ENCODE measurements at regions of chr7 and their contacts with region 1.

Region 1: GRCh38 chr7:158829342-158830210 is at the start of gene ESYT2:
- DNase-seq: peak; percentile 98 to 100 (median 99)
- H3K4me3 ChIP-seq: peak within 1 kb of the TSS; percentile 87 to 89
- H3K4me3 Mint-ChIP-seq: peak within 1 kb of the TSS; percentile 81 to 98 (median 95)
- H3K27ac ChIP-seq: peak within 1 kb of the TSS; percentile 95
- H3K27ac Mint-ChIP-seq: peak within 1 kb of the TSS; percentile 90 to 99 (median 95)
- H3K4me1 ChIP-seq: peaks cover 41% of the 10 kb centered on the region
- H3K4me1 Mint-ChIP-seq: peaks cover 16 to 47% (median 25%) of the 10 kb centered on the region in 4 donors
- H3K27me3 ChIP-seq: no peaks in the 10 kb centered on the region
- H3K27me3 Mint-ChIP-seq: no peaks in the 10 kb centered on the region
- total RNA-seq, gene ESYT2: 114 to 116 TPM

Region 2: GRCh38 chr7:158760936-158761335 is 68.6 kb before region 1 on chr7:
- CTCF ChIA-PET with region 1: interaction called, 4 read pairs
- POLR2A ChIA-PET with region 1: interaction called, 5 read pairs
- intact Hi-C with region 1: loop called (anchors 2 kb)
- DNase-seq: peak in 2 of 5 donors; percentile 19 to 24
- H3K4me3 ChIP-seq: no peak overlapping the region
- H3K4me3 Mint-ChIP-seq: no peak overlapping the region
- H3K27ac ChIP-seq: no peak overlapping the region
- H3K27ac Mint-ChIP-seq: peak overlapping the region in 5 of 7 donors; percentile 5 to 82 (median 56)
- H3K4me1 ChIP-seq: no peaks in the 10 kb centered on the region
- H3K4me1 Mint-ChIP-seq: peaks cover 0 to 8% (median 1%) of the 10 kb centered on the region in 4 donors
- H3K27me3 ChIP-seq: no peaks in the 10 kb centered on the region
- H3K27me3 Mint-ChIP-seq: no peaks in the 10 kb centered on the region

Region 3: GRCh38 chr7:158795272-158795671 is 34.3 kb before region 1 on chr7:
- CTCF ChIA-PET with region 1: interaction called, 3 read pairs
- POLR2A ChIA-PET with region 1: interaction called, 20 read pairs
- intact Hi-C with region 1: no loop called
- DNase-seq: no peak
- H3K4me3 ChIP-seq: no peak overlapping the region
- H3K4me3 Mint-ChIP-seq: no peak overlapping the region
- H3K27ac ChIP-seq: no peak overlapping the region
- H3K27ac Mint-ChIP-seq: no peak overlapping the region
- H3K4me1 ChIP-seq: peaks cover 16% of the 10 kb centered on the region
- H3K4me1 Mint-ChIP-seq: peaks cover 13 to 34% (median 21%) of the 10 kb centered on the region in 4 donors
- H3K27me3 ChIP-seq: no peaks in the 10 kb centered on the region
- H3K27me3 Mint-ChIP-seq: no peaks in the 10 kb centered on the region

Region 4: DNA sequence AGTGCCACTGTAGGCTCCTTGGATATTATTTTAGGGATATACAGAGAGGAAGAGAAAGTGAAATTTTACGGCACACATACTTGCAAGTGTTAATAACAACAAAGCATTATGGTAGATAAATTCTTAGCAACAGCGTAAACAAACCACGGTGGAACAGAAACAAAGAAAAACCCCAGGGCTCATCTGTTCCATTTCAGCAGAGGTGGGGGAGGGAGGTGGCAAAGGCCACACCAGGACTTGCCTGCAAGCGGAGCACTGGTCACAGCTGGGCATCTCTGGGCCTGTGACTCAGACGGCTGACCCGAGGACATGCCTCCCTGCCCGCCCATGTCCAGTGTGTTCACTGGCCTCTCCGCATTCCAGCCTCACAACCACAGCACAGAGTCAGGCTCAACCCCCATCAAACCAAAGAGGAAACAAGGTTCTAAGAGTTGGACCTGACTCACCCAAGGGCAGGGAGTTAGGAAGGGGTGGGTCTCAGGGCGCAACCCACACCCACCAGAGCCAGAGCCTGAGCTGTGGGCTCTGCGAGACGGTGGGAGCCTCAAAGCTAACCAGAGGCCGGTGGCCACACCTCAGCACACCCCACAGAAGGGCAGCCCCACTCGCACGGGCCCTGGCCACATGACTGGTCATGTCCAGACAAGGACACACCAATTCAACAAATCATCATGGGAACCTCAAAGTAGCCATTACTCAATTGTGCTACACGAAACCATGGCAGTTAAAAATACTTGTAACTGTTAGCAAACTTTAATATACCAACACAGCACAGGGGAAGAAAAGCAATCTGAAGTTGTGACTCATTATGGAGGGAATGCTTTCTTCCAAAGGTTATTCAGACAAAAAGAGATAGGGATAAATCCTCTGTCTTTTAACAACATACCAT is 11.0 kb before region 1 on chr7:
- CTCF ChIA-PET with region 1: interaction called, 8 read pairs
- POLR2A ChIA-PET with region 1: interaction called, 255 read pairs
- intact Hi-C with region 1: loop called (anchors 1 kb)
- DNase-seq: peak; percentile 86 to 95 (median 88)
- H3K4me3 ChIP-seq: peak overlapping the region; percentile 37 to 53
- H3K4me3 Mint-ChIP-seq: peak overlapping the region; percentile 85 to 96 (median 90)
- H3K27ac ChIP-seq: peak overlapping the region; percentile 91
- H3K27ac Mint-ChIP-seq: peak overlapping the region; percentile 97 to 100 (median 99)
- H3K4me1 ChIP-seq: peaks cover 93% of the 10 kb centered on the region
- H3K4me1 Mint-ChIP-seq: peaks cover 70 to 94% (median 82%) of the 10 kb centered on the region in 4 donors
- H3K27me3 ChIP-seq: no peaks in the 10 kb centered on the region
- H3K27me3 Mint-ChIP-seq: no peaks in the 10 kb centered on the region

Region 5: GRCh38 chr7:158856883-158857668 is 27.5 kb after region 1 on chr7:
- CTCF ChIA-PET with region 1: interaction called, 5 read pairs
- POLR2A ChIA-PET with region 1: interaction called, 17 read pairs
- intact Hi-C with region 1: loop called (anchors 1 kb)
- DNase-seq: peak in 1 of 5 donors; percentile 6
- H3K4me3 ChIP-seq: peak overlapping the region; percentile 80 to 81
- H3K4me3 Mint-ChIP-seq: peak overlapping the region; percentile 75 to 98 (median 90)
- H3K27ac ChIP-seq: peak overlapping the region; percentile 77
- H3K27ac Mint-ChIP-seq: peak overlapping the region; percentile 46 to 92 (median 79)
- H3K4me1 ChIP-seq: peaks cover 19% of the 10 kb centered on the region
- H3K4me1 Mint-ChIP-seq: peaks cover 18 to 34% (median 23%) of the 10 kb centered on the region in 4 donors
- H3K27me3 ChIP-seq: no peaks in the 10 kb centered on the region
- H3K27me3 Mint-ChIP-seq: no peaks in the 10 kb centered on the region

Measured in CD4-positive, alpha-beta memory T cell (primary cell).